Sciatic nerve (tissue), 2 donors: ENCODE measurements at regions of chr15 and their contacts with region 1.

Region 1: DNA sequence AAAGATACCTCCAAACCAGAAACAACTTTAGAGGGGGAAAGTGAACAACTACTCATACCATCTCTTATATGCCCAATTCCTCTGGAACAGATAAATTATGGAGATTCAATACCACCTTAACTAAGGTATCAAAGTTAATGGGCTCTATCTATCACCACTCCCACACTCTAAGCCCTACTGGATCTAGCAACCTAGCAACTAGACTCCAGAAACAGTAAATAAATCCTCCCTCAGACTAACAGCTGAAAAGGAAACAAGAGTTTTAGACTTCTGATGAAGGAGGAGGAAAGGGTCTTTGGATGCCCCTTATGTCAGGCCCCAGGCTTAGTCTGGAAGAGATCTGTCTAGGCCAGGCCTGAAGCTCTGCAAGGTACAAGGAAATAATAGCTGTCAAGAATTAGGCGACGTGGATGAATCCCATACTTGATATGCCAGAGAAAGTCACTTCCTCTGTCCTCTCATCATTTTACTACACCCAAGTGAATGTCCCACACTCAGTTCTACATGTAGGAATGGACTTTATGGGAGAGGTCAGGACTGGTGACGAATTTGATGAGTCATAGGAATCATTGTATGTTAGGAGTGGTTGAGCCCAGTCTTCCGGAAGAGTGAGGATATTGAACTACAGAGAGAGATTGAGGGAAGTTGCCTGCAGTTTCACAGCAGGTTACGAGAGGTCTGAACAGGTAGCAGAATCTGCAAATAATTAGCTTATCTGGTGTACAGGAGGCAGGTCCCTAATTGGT is 113.8 kb downstream of the AKAP13 start:
- DNase-seq: no peak
- ATAC-seq: no peak

Region 2: DNA sequence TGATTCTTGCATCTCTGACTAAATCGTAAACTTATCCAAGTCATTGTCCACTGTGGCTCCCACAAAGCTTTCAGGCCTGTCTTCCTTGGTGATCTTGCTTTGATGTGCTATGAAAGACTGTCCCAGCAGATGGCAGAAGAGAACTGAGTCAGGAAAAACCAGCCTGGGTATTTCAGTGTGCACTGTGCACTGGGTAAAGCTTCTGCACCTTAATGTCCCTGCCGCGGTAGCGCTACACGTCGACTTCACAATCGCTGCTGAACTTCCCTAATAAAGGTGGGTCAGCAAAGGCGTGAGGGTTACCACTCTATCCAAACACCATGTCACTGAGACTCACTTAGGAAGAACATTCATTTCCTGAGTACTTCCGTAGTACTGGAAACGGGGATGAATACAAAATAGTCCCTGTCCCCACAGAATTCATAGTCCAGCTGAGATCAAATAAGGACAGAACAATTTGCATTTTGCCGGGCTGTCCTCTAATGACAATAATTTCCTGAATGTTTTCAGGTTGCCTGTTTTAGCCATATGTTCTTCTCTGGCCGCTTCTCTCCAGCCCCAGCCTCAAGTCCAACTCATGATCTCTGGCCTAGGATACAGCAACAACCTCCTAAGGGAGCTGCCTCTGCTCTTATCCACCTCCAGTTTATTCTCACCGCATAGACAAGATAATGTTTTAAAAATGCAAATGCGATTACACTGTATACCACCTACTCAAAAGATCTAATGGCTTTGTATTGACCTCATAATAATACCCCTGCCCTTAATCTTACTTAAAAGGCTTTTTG is 197.4 kb before region 1 on chr15:
- intact Hi-C with region 1: loop called (anchors 10 kb)
- DNase-seq: peak; percentile 69
- ATAC-seq: peak; percentile 97

Region 3: DNA sequence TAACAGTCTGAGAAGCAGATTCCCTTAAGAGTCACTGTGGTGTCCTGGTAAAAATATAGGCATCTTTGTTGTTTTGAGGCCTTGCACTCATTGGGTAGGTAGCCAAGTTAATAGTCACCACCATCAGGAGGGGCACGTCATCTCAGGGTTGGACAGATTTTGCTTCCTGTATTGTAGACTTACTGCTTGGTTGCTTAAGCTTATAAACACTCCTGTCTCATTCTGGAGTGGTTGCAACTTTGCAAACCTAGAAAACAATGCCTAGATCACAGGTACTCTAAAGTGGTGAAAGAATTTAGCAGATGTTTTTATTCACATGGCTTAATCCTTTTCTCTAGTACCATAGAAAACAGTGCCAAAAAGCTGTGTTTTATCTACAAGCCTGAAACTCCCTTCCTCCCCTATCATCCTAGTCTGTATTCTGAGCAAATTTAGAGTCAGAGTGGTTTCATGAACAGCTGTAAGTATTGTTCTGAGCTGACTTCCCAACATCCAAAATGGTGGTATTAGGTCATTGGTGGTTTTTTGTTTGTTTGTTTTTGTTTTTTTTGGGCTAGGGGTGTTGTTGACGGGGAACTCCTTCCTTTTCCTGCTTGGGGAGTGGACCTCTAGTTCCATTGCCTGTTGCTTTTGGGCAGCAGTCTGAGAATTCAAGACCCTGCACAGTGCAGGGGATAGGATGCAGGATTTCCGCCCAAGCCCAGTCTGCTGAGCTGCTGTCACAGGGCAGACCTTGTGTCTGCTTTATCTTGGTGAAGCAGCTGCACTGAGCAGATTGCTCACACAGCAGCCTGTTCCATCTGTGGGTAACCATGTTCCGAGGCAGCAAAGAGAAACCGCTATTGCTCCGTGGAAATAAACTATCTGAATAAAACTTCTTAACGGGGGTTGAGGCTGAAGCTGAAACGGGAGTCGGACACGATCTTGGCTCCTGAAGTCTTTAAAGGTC is 88.2 kb after region 1 on chr15:
- intact Hi-C with region 1: loop called (anchors 5 kb)
- DNase-seq: peak; percentile 80
- ATAC-seq: peak; percentile 77